ENCODE measurements at regions of chr4 and their contacts with region 1.

Region 1: GRCh38 chr4:145180298-145181090 is at the start of gene OTUD4:
- DNase-seq: peak; percentile 96
- ATAC-seq: peak; percentile 79
- H3K4me3 ChIP-seq: peak within 1 kb of the TSS; percentile 87
- H3K27ac ChIP-seq: peak within 1 kb of the TSS; percentile 78
- H3K4me1 ChIP-seq: peaks cover 21% of the 10 kb centered on the region
- H3K27me3 ChIP-seq: no peaks in the 10 kb centered on the region
- CTCF ChIP-seq: no peak; the same call in 1 of the 2 replicates
- total RNA-seq, gene OTUD4: 13.6 and 20.6 TPM in 2 replicates

Region 2: DNA sequence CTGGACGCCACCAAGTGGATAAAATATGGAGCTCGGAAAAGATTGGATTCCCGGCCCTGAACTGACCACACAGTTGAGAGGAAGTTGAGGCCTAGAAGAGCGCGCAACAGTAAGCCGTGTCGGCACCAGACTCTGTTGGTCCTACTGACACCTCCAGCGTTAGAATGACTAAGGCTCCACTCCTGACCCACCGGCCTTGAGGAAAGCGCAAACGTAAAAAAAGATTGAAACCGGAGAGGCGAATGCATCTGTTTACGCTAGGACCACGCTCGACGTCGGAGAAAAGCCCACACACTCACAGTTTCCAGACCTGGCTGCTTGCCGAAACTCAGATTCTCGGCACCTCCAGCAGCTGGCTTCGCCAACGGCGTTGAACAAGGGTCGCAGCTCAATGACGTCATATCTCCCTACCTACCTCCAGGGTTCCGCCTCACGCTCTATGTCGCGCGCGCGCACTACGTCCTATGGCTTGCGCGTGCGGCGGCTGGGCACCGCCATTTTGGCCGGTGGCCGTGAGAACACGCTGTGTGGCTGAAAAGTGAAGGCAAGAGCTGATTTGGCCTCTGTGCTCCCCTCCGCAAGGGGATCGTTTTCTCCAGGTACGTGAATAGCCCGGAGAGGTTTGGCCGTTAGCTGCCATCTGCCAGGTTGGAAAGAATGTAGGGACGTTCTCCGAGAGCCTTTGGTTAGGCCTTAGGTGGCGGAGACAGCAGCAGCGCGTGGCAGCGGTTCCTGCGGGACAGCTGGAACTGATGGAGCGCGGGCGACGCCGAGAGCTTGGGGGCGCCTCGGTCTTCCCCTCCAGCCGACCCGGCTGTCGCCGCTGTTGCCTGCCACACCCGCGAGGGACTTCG is 82.4 kb before region 1 on chr4 and contains the starts of genes ABCE1 and ANAPC10:
- CTCF ChIA-PET with region 1: no interaction called
- POLR2A ChIA-PET with region 1: interaction called, 5 read pairs
- intact Hi-C with region 1: loop called (anchors 2 kb)
- DNase-seq: peak; percentile 99
- ATAC-seq: peak; percentile 84
- H3K4me3 ChIP-seq: peak within 1 kb of the TSS; percentile 82
- H3K27ac ChIP-seq: peak within 1 kb of the TSS; percentile 86
- H3K4me1 ChIP-seq: peaks cover 28% of the 10 kb centered on the region
- H3K27me3 ChIP-seq: no peaks in the 10 kb centered on the region
- CTCF ChIP-seq: peak; percentile 55; the same call in 1 of the 2 replicates
- total RNA-seq, gene ABCE1: 131 and 153 TPM in 2 replicates
- total RNA-seq, gene ANAPC10: 26.0 and 33.1 TPM in 2 replicates

Region 3: DNA sequence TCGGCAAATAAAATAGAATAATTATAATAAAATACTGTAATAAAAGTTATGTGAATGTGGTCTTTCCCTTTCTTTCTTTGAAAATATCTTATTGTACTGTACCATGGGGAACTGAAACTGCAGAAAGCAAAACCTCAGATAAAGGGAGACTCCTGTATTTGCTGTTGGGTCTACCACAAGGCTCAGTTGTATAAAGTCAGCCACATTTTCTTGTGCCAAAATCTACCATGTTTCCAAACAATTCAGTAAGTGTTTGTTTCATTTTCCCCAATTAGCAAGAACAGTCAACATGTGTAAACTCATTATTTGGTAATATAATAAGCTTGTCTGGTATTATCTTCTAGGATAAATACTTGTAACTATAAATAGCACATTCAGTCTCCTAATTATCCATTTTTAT is 14.7 kb after region 1 on chr4:
- CTCF ChIA-PET with region 1: no interaction called
- POLR2A ChIA-PET with region 1: interaction called, 5 read pairs
- intact Hi-C with region 1: loop called (anchors 2 kb)
- DNase-seq: no peak
- ATAC-seq: peak; percentile 23; the same call in 1 of the 2 replicates
- H3K4me3 ChIP-seq: peak overlapping the region; percentile 21; the same call in 1 of the 2 replicates
- H3K27ac ChIP-seq: peak overlapping the region; percentile 37
- H3K4me1 ChIP-seq: peaks cover 8% of the 10 kb centered on the region
- H3K27me3 ChIP-seq: no peaks in the 10 kb centered on the region
- CTCF ChIP-seq: no peak

Measured in PC-3 (cell line).